ENCODE measurements at regions of chr12 and their contacts with region 1.

Region 1: DNA sequence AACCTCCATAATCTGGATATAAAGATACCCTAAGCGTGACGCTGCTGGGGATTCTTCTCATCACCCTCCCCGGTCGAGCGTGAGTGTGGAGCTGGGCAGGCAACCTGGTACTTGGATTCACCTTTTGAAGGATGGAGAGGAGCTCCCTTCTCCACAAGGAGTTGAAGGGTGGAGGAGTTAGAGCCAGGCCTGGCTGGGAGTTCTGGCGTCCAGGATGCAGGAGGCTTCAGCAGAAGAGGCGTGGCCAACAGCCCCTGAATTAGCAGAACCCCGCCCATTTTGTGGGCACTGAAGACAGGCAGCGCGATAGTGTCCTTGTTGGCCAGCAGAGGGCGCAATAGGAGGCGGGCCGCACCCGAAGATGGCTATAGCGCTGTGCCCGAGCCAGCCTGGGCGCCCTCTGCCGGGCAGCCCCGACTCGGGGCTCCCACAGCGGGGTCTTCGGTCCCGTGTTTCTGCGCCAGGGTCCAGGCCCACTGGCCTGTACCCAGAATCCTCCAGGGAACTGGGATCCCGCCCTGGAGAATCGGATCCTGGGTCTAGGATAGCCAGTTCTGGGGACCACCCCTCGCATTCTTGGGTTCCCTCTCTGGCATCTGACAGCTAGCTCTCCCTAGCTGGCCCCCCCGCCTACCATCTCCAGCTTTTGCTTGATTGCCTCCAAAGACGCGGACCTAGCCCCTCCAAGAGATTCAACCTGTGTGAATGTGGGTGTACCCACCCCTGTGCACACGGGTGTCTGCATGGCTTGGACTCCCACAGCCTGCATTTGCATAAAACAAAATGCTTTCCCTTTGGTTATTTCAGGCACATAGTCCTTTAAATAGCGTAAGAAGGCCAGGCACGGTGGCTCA is 26.0 kb upstream of the SMUG1 start:
- DNase-seq: peak; percentile 29
- H3K4me3 ChIP-seq: 0 out of 2 replicates have a peak overlapping the region, but pooled peaks have one; percentile 7
- H3K27me3 ChIP-seq: peaks cover 3% of the 10 kb centered on the region
- CTCF ChIP-seq: peak; percentile 100

Region 2: DNA sequence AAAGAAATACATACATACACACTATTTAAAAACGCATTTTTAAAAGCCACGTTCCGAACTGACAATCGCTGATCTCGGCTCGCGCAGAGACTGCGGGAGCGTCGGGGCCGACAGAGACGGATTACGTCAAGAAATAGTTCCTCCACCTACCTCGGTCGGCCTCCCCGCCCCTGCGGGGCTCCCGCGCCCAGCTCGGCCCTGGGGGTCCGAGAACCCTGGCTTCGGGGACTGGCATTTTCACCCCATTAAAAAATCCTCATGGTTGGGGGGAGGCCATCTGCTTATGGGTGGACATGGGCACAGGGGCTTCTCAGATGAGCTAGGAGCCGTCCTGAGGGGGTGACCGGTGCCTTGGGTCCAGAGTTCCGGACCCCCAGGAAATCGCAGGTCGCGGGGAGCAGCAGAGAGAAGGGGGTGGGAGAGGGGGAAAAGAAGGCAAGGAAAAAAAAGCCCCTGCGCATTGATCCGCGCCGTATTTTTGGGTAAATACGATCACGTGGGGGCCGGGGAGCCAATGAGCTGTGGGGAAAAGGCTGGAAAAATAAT is 215.1 kb before region 1 on chr12:
- CTCF ChIA-PET with region 1: interaction called, 213 read pairs
- POLR2A ChIA-PET with region 1: no interaction called
- DNase-seq: no peak
- H3K4me3 ChIP-seq: peak overlapping the region; percentile 73
- H3K27me3 ChIP-seq: peaks cover 2% of the 10 kb centered on the region; the same call in 1 of the 2 replicates
- CTCF ChIP-seq: no peak

Region 3: GRCh38 chr12:54017878-54018467 is 196.8 kb before region 1 on chr12:
- CTCF ChIA-PET with region 1: interaction called, 35 read pairs
- POLR2A ChIA-PET with region 1: no interaction called
- DNase-seq: no peak
- H3K4me3 ChIP-seq: peak overlapping the region; percentile 72
- H3K27me3 ChIP-seq: peaks cover 13% of the 10 kb centered on the region
- CTCF ChIP-seq: no peak

Region 4: GRCh38 chr12:54147186-54147585 is 67.6 kb before region 1 on chr12:
- CTCF ChIA-PET with region 1: no interaction called
- POLR2A ChIA-PET with region 1: no interaction called
- DNase-seq: no peak
- H3K4me3 ChIP-seq: no peak overlapping the region
- H3K27me3 ChIP-seq: peaks cover 3% of the 10 kb centered on the region
- CTCF ChIP-seq: no peak

Region 5: DNA sequence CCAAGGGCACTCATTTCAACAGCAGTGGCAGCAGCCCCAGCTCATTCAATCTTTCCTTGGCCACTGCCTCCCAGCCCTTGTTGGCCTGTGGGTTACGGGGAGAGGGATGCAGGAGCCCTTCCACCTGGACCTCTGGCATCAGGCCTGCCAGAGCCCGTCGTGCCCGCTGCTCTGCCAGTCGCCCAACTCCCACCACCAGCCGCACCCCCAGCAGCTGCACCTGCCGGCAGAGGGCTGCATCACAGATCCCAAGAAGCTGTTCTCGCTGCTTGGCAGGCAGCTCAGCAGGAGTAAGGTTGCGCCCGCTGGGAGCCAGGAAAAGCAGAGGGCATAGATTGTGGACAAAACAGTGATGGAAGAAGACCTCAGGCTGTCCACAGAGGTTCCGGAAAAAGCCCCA is 32.7 kb before region 1 on chr12:
- CTCF ChIA-PET with region 1: no interaction called
- POLR2A ChIA-PET with region 1: no interaction called
- DNase-seq: no peak
- H3K4me3 ChIP-seq: no peak overlapping the region
- H3K27me3 ChIP-seq: no peaks in the 10 kb centered on the region
- CTCF ChIP-seq: no peak

Region 6: DNA sequence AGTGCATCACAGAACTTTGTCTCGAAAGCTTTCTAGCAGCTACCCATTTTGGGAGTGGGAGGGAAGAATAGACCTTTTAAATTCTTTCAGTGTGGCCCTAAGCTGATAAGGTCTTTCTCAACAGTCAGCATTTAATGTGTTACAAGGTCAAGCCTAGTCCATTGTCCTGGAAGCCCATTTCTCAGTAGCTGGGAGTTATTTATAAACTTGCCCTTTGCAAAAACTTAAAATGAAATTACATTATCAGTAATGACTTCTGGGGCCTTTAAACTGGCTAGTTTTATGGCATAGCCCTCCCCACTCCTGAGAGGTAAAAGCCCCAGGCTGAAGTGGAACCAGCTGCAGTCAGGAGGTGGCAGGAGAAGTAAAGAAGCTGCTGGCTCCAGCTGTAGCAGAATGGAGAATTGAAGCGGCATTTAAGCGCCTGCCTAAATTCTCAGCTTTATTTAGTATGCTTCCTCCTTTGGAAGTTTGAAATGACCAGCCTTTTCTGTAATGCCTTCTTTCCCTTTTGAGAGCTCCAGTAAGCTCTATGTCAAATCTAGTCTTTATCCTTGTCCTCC is 122.6 kb after region 1 on chr12:
- CTCF ChIA-PET with region 1: interaction called, 10 read pairs
- POLR2A ChIA-PET with region 1: no interaction called
- DNase-seq: no peak
- H3K4me3 ChIP-seq: no peak overlapping the region
- H3K27me3 ChIP-seq: no peaks in the 10 kb centered on the region
- CTCF ChIP-seq: peak; percentile 31; the same call in 1 of the 2 replicates

Region 7: GRCh38 chr12:54368709-54369583 is 154.2 kb after region 1 on chr12:
- CTCF ChIA-PET with region 1: interaction called, 17 read pairs
- POLR2A ChIA-PET with region 1: no interaction called
- DNase-seq: peak; percentile 39
- H3K4me3 ChIP-seq: no peak overlapping the region
- H3K27me3 ChIP-seq: no peaks in the 10 kb centered on the region
- CTCF ChIP-seq: peak; percentile 93

Measured in BJ (cell line).